Heart right ventricle (tissue), 16 donors: ENCODE measurements at regions of chr19 and their contacts with region 1.

Region 1: DNA sequence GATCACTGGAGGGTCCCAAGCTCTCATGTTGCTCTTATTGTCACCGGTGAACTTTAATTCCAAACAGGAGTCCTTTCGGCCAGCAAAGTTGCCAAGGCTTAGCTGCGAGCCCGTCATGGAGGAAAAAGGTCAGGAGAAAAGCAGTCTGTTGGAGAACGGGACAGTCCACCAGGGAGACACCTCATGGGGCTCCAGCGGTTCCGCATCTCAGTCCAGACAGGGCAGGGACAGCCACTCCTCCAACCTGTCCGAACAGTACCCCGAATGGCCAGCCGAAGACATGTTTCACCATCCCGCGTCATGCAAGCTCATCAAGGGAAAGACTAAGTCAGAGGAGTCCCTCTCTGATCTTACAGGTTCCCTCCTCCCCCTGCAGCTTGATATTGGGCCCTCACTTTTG is 10.4 kb downstream of the ZNF91 start:
- DNase-seq: no peak
- ATAC-seq: peak in 3 of 8 donors; percentile 20 to 53 (median 52)
- H3K4me3 ChIP-seq: no peak overlapping the region
- H3K27ac ChIP-seq: peak overlapping the region in 2 of 10 donors; percentile 11 to 51
- H3K4me1 ChIP-seq: peaks cover 0 to 57% (median 24%) of the 10 kb centered on the region in 9 donors
- H3K27me3 ChIP-seq: no peaks in the 10 kb centered on the region
- CTCF ChIP-seq: no peak

Region 2: DNA sequence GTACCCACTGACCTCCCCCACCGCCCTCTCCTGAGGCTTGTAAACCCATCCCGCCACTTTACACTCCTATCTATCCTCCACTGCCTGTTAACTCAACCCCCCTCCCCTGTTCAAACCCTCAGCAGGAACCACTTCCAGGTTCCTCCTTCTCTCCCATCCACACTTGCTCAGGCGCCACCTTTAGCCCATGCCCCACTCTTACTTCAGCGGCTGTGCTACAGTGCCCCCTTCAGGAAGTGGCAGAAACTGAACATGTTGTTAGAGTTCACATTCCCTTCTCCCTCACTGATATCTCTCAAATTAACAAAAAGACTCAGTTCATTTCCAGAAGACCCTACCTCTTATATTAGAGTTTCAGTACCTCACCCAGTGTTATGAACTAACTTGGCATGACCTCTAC is 39.0 kb before region 1 on chr19:
- intact Hi-C with region 1: loop called in 1 of 10 experiments (anchors 5 kb)
- DNase-seq: no peak
- ATAC-seq: no peak
- H3K4me3 ChIP-seq: no peak overlapping the region
- H3K27ac ChIP-seq: no peak overlapping the region
- H3K4me1 ChIP-seq: peaks cover 0 to 7% (median 0%) of the 10 kb centered on the region in 9 donors
- H3K27me3 ChIP-seq: no peaks in the 10 kb centered on the region
- CTCF ChIP-seq: peak in 1 of 9 donors; percentile 8

Region 3: GRCh38 chr19:23832717-23833327 is 448.0 kb after region 1 on chr19:
- intact Hi-C with region 1: no loop called
- DNase-seq: no peak
- ATAC-seq: no peak
- H3K4me3 ChIP-seq: no peak overlapping the region
- H3K27ac ChIP-seq: no peak overlapping the region
- H3K4me1 ChIP-seq: no peaks in the 10 kb centered on the region
- H3K27me3 ChIP-seq: no peaks in the 10 kb centered on the region
- CTCF ChIP-seq: no peak